Left lung (tissue), 14 donors: ENCODE measurements at regions of chr1 and their contacts with region 1.

Region 1: GRCh38 chr1:9867408-9868243 is 42.4 kb downstream of the CTNNBIP1 start:
- DNase-seq: peak; percentile 61 to 94 (median 78)
- ATAC-seq: peak; percentile 96
- H3K4me3 ChIP-seq: no peak overlapping the region
- H3K27ac ChIP-seq: no peak overlapping the region
- H3K4me1 ChIP-seq: no peaks in the 10 kb centered on the region
- H3K27me3 ChIP-seq: no peaks in the 10 kb centered on the region
- CTCF ChIP-seq: peak; percentile 96 to 98

Region 2: GRCh38 chr1:9629445-9630201 is 238.0 kb before region 1 on chr1:
- intact Hi-C with region 1: loop called in 1 of 2 experiments (anchors 10 kb)
- DNase-seq: peak in 3 of 4 donors; percentile 24 to 95 (median 85)
- ATAC-seq: peak; percentile 45
- H3K4me3 ChIP-seq: peak overlapping the region in 1 of 2 donors; percentile 31
- H3K27ac ChIP-seq: peak overlapping the region; percentile 13 to 77
- H3K4me1 ChIP-seq: peaks cover 0 to 61% of the 10 kb centered on the region in 2 donors
- H3K27me3 ChIP-seq: peaks cover 0 to 30% of the 10 kb centered on the region in 2 donors
- CTCF ChIP-seq: no peak

Region 3: DNA sequence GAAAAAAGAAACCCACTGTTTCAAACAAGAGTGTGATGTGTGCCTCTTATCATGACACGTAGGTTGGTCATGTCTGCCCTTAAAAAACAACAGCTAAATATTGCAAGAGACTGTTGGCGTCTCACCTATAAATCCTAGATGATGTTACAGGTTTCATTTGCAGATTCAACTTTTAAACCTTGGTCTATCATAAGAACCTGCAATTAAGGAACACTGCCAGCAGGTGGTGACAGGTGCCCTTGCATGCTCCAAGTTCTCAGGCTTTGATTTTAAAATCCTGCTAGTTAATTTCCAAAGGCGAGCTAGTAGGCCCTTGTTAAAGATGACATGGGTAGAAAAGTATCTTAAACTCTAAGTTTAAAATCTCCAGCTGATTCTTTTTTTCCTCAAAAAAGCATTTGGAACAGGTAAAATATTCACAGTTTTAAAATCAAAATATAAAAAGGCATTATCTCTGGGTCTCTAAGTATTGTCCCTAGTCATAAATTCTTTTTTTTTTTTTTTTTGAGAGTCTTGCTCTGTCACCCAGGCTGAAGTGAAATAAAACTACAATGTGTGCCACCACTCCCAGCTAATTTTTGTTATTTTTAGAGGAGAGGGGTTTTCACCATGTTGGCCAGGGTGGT is 83.0 kb before region 1 on chr1:
- intact Hi-C with region 1: loop called in 1 of 2 experiments (anchors 5 kb)
- DNase-seq: peak in 1 of 4 donors; percentile 44
- ATAC-seq: peak; percentile 87
- H3K4me3 ChIP-seq: no peak overlapping the region
- H3K27ac ChIP-seq: no peak overlapping the region
- H3K4me1 ChIP-seq: peaks cover 0 to 6% of the 10 kb centered on the region in 2 donors
- H3K27me3 ChIP-seq: no peaks in the 10 kb centered on the region
- CTCF ChIP-seq: peak; percentile 49 to 65